Activated naive CD8-positive, alpha-beta T cell treated with anti-CD3 and anti-CD28 coated beads, Interleukin-2, amount 10 ng/mL, durations not matched to agents 7 days and 5 days (primary cell): ENCODE measurements at regions of chr11 and their contacts with region 1.

Region 1: GRCh38 chr11:269146-269890 is 8.9 kb upstream of the NLRP6 start:
- DNase-seq: peak; percentile 56
- ATAC-seq: peak; percentile 34
- H3K4me3 Mint-ChIP-seq: peak overlapping the region; percentile 91
- H3K27ac Mint-ChIP-seq: peak overlapping the region; percentile 96
- H3K4me1 Mint-ChIP-seq: peaks cover 25% of the 10 kb centered on the region
- H3K27me3 Mint-ChIP-seq: peaks cover 2% of the 10 kb centered on the region

Region 2: GRCh38 chr11:199782-200181 is 69.5 kb before region 1 on chr11:
- POLR2A ChIA-PET with region 1: no interaction called
- DNase-seq: peak; percentile 25
- ATAC-seq: no peak
- H3K4me3 Mint-ChIP-seq: no peak overlapping the region
- H3K27ac Mint-ChIP-seq: no peak overlapping the region
- H3K4me1 Mint-ChIP-seq: peaks cover 22% of the 10 kb centered on the region
- H3K27me3 Mint-ChIP-seq: no peaks in the 10 kb centered on the region

Region 3: DNA sequence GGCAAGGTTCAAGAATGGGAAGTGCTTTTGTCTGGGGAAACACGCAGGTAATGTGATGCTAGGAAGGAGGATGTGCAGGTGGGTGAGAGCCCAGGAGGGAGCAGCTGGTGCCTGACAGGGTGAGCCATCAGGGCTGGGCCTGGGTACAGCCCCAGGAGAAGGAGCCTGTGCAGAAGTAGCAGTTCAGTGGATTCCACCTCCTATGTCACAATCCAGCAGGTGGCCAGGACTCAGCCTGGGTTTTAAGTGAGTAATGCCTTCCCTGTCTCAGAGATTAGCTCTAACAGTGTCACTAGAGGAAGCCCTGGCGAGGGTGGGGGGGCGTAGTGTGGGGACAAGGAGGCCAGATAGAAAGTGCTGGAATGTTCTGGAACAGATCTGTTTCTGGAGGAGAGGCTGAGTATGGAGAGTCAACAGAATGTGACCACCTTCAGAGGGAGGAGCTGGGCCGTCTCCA is 53.7 kb before region 1 on chr11:
- POLR2A ChIA-PET with region 1: no interaction called
- DNase-seq: no peak
- ATAC-seq: no peak
- H3K4me3 Mint-ChIP-seq: no peak overlapping the region
- H3K27ac Mint-ChIP-seq: no peak overlapping the region
- H3K4me1 Mint-ChIP-seq: peaks cover 10% of the 10 kb centered on the region
- H3K27me3 Mint-ChIP-seq: no peaks in the 10 kb centered on the region

Region 4: DNA sequence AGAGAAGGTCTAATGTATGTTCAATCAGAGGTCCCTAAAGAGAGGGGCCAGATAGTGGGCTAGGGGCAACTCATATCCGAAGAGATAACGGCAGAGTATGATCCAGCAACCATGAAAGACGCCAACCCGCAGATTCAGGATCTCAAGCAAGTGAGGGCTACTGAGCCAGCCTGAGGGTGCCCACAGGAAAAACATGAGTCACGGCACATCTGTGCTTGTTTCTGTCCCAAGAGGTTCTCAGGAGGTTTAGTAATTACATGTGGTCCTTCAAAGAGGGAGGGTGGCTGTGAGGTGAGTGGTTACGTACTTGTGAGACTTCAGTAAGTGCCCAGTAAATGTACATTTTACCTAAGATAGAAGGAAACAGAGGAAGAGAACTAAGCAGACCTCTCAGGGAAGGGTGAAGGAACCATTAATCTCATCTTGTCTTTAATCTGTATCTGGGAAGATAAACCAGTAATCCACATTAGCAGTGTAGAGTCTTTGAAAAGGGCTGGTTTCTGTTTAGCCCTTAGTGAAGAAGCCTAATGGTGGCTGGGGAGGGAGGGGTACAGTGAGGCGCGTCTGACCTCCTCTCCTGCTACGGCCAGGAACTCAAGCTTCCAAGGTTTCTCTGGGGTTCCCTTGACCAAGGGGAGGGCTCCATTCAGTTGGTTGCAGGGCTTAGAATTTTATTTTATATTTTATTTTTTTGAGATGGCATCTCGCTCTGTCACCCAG is 43.4 kb before region 1 on chr11:
- POLR2A ChIA-PET with region 1: no interaction called
- DNase-seq: no peak
- ATAC-seq: no peak
- H3K4me3 Mint-ChIP-seq: no peak overlapping the region
- H3K27ac Mint-ChIP-seq: no peak overlapping the region
- H3K4me1 Mint-ChIP-seq: peaks cover 9% of the 10 kb centered on the region
- H3K27me3 Mint-ChIP-seq: no peaks in the 10 kb centered on the region

Region 5: DNA sequence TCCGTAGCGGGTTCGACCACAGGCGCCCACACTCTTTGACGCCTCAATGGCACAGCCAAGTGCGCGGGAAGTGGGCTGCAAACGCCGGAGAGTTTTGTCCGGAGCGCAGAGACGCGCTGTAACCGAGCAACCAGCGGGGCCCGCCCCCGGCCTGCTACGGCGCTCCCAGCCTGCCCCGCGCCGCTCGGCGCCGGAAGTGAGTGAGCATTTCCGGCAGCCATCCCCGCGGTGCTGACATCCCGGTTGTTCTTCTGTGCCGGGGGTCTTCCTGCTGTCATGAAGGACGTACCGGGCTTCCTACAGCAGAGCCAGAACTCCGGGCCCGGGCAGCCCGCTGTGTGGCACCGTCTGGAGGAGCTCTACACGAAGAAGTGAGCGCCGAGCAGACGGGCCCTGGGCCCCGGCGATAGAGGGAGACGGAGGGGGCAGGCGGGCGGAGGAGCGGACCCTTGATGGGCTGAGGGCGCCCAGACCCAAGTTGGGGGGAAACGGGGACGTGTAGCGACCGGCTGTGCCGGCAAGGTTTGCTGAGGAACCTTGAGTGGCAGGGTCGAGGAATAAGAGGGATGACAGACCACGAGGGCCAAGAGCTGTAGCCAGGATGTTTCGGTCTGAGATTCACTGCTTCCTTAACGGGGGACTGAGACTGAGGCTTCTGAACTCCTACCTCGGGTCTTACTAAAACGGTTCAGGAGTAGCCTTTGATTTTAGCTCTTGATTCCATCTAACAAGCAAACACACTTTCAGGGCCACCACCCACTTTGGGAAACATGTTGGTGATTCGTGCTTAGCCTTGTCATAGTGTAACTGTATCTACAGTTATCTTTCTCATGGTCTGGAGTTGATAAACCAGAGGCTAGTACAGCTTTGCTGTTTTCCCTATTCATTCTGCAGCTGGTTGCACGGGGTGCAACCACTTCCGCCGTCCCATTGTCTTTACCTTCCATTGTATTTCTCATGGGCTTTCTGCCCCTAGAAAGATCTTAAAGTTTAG is 32.2 kb before region 1 on chr11 and contains the start of gene PSMD13:
- POLR2A ChIA-PET with region 1: interaction called, 15 read pairs
- DNase-seq: peak; percentile 92
- ATAC-seq: peak; percentile 85
- H3K4me3 Mint-ChIP-seq: peak within 1 kb of the TSS; percentile 98
- H3K27ac Mint-ChIP-seq: peak within 1 kb of the TSS; percentile 98
- H3K4me1 Mint-ChIP-seq: peaks cover 39% of the 10 kb centered on the region
- H3K27me3 Mint-ChIP-seq: no peaks in the 10 kb centered on the region
- total RNA-seq, gene PSMD13: 130 to 131 TPM

Region 6: DNA sequence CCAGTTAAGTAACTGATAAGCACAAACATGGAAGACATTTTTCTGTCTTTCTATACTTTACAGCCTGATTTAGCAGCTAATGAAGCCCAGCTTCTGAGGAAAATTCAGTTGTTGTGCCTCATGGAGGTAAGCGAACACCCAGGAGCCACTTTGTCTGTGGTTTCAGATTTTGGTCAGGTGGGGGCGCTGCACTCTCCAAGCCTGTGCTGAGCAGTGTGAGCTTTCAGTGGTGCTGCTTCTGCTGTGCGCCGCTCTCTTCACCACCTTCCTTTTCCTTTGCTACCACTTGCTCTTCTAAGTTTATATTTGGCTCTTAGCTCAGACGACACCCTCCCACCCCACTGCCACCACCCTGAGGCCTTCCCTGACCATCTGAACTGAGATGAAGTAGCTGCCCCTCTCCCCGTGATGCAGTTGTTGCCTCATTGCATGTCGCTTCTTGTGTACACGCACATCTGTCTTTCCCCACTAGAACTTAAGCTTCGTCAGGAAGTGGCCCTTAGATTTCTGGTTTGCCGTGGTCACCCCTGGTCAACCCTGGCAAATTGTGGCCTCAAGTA is 18.5 kb before region 1 on chr11:
- POLR2A ChIA-PET with region 1: interaction called, 21 read pairs
- DNase-seq: peak; percentile 83
- ATAC-seq: peak; percentile 98
- H3K4me3 Mint-ChIP-seq: peak overlapping the region; percentile 63
- H3K27ac Mint-ChIP-seq: peak overlapping the region; percentile 82
- H3K4me1 Mint-ChIP-seq: peaks cover 14% of the 10 kb centered on the region
- H3K27me3 Mint-ChIP-seq: no peaks in the 10 kb centered on the region

Region 7: GRCh38 chr11:279966-280582 is 10.8 kb after region 1 on chr11:
- POLR2A ChIA-PET with region 1: interaction called, 336 read pairs
- DNase-seq: peak; percentile 69
- ATAC-seq: peak; percentile 31
- H3K4me3 Mint-ChIP-seq: peak overlapping the region; percentile 89
- H3K27ac Mint-ChIP-seq: peak overlapping the region; percentile 95
- H3K4me1 Mint-ChIP-seq: peaks cover 32% of the 10 kb centered on the region
- H3K27me3 Mint-ChIP-seq: no peaks in the 10 kb centered on the region

Region 8: GRCh38 chr11:288328-289144 is 19.2 kb after region 1 on chr11 and contains the start of gene PGGHG:
- POLR2A ChIA-PET with region 1: interaction called, 336 read pairs
- DNase-seq: peak; percentile 88
- ATAC-seq: peak; percentile 38
- H3K4me3 Mint-ChIP-seq: peak within 1 kb of the TSS; percentile 93
- H3K27ac Mint-ChIP-seq: peak within 1 kb of the TSS; percentile 98
- H3K4me1 Mint-ChIP-seq: peaks cover 34% of the 10 kb centered on the region
- H3K27me3 Mint-ChIP-seq: no peaks in the 10 kb centered on the region
- total RNA-seq, gene PGGHG: 641 to 664 TPM

Region 9: GRCh38 chr11:299951-300735 is 30.8 kb after region 1 on chr11:
- POLR2A ChIA-PET with region 1: interaction called, 264 read pairs
- DNase-seq: peak; percentile 57
- ATAC-seq: no peak
- H3K4me3 Mint-ChIP-seq: peak overlapping the region; percentile 44
- H3K27ac Mint-ChIP-seq: peak overlapping the region; percentile 58
- H3K4me1 Mint-ChIP-seq: peaks cover 52% of the 10 kb centered on the region
- H3K27me3 Mint-ChIP-seq: peaks cover 8% of the 10 kb centered on the region

Region 10: DNA sequence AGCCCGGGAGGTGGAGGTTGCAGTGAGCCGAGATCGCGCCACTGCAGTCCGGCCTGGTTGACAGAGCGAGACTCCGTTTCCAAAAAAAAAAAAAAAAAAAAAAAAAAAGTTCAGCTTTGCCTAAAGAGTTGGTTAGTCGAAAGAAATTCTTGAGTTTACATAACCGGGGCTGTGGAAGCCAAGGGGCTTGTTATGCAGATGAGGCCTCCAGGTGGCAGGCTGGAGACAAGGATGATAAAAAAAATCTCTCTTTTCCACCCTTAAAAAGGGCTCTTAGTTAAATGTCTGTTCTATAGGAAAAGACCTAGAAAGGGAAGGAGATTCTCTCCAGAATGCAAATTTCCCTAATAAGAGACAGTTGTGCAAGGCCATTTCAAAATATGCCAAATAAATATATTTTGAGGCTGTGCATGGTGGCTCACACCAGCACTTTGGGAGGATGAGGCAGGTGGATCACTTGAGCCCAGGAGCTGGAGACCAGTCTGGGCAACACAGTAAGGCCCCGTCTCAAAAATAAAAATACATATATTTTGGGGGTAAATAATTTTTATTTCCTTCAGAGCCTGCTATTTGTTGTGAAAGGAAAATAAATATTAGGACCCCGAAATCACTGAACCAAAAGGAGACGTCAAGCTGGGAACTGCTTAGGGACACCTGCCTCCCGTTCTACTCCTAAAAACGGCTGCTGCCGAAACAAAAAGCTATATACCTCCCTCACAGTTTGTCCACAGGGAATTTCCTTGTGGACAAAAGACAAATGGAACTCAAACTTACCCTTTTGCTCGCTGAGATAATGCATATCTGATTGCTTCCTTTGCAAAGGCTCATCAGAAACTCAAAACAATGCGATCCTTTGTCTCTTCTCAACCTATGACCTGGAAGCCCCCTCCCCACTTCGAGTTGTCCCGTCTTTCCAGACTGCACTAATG is 35.9 kb after region 1 on chr11:
- POLR2A ChIA-PET with region 1: interaction called, 33 read pairs
- DNase-seq: peak; percentile 63
- ATAC-seq: no peak
- H3K4me3 Mint-ChIP-seq: no peak overlapping the region
- H3K27ac Mint-ChIP-seq: peak overlapping the region; percentile 28
- H3K4me1 Mint-ChIP-seq: peaks cover 44% of the 10 kb centered on the region
- H3K27me3 Mint-ChIP-seq: peaks cover 7% of the 10 kb centered on the region

Region 11: GRCh38 chr11:460331-461199 is 191.2 kb after region 1 on chr11:
- POLR2A ChIA-PET with region 1: no interaction called
- DNase-seq: no peak
- ATAC-seq: no peak
- H3K4me3 Mint-ChIP-seq: no peak overlapping the region
- H3K27ac Mint-ChIP-seq: no peak overlapping the region
- H3K4me1 Mint-ChIP-seq: peaks cover 22% of the 10 kb centered on the region
- H3K27me3 Mint-ChIP-seq: no peaks in the 10 kb centered on the region